ENCODE measurements at regions of chr1 and their contacts with region 1.

Region 1: DNA sequence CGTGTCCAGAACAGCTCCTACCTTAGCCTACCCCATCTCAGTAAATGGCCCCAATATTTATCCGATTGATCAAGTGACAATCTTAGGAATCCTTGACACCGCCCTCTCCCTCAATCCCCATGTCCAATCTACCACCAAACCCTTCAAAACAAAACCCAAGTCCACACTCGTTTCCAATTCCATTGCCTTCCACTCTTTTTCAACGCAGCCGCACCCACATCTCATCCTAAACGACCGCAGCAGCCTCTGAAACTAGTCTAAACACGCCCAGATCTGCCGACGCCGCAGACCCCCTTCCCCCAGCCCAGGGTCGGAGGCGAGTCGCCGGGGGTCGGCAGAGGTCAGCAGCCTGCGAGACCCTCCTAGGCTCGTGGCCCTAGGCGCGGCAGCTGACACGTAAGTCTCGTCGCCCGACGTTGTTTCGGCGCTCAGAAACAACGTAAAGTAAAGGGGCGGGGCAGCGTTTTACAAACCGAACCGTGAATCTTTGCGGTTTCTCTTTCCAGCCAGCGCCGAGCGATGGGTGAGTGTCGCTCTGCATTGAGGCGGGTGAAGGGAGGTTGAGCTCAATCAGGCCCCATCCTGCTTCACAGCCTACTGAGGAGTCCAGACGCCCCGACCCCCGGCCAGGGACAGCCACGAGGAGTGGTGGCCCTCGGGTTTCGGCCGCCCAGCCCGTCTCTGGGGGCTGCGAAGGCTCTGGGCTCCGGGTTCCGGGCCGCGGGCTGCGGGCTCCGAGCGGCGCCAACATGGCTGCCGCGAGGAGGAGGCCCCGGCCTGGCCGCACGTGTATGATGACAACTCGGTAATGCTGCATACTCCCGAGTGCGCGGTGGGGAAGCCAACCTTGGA is at the start of gene RPS8:
- DNase-seq: peak; percentile 84

Region 2: GRCh38 chr1:44401256-44402228 is 373.8 kb before region 1 on chr1:
- CTCF ChIA-PET with region 1: no interaction called
- POLR2A ChIA-PET with region 1: no interaction called
- DNase-seq: no peak

Region 3: DNA sequence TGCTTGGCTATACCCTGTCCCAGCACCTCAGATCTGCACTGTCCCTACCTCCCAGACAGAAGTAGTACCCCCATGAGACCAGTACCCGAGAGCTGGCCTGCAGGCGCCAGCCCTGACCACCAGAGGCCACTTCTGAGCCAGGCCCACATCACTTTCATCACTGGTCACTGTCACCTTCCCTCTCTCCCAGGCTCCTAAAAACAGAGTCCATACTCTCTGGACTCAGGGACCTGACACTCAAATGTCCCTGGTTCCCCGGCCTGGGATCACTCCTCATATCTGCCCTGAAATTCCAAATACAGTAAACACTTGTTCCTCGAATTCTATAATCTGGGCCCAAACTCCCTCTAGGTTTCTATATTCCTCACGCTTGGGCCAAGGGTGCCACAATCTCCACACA is 119.7 kb before region 1 on chr1:
- CTCF ChIA-PET with region 1: no interaction called
- POLR2A ChIA-PET with region 1: no interaction called
- DNase-seq: peak; percentile 62

Region 4: DNA sequence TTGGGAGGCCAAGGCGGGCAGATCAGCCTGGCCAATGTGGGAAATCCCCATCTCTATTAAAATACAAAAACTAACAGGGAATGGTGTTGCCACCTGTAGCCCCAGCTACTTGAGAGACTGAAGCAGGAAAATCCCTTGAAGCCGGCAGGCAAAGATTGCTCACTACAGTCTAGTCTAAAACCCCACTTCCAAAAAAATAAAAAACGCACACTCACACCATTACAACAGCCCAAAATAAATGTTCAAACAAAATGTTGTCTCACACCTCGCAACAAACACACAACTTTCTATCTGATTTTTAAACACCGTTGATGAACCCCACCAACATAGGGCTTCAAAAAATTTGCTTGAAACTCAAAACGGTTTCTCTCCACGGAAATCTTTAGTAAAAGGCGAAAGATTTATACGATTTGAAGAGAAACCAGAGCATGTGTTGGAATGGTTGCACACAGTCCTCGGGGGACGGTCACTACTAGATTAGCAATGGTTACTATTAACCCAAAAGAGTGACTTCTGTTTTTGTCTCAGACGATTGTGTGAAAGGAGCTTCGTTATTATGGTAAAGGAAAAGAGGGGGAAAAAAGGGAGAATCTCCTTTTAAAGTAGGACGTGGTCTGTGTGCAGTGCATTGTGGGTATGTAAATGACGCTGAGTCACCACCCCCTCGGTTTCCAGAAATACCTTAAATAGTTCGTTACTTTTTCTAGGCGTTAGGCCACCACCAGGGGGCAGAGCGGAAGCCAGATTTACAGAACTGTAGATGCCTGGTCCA is 44.4 kb before region 1 on chr1 and contains the start of gene RNU5D-1:
- CTCF ChIA-PET with region 1: interaction called, 3 read pairs
- POLR2A ChIA-PET with region 1: interaction called, 31 read pairs
- DNase-seq: peak; percentile 77

Region 5: DNA sequence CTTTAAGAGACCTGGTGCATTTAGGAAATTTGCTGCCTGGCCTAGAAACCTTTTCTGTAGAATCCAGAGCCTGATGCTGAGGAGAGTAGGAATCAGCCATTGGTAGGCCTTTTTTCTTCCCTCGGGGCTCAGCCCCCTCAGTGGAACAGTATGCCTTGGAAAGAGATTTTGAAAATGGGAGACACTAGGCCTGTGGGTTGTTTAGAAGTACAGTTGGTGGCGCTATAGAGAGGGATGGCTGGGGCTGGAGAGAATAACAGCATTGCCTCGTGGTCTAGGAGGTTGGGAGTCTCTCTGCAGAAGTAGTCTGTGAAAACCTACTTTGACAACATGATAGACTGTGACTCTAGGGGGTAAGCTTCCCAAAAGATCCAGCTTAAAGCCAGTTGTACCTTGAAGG is 27.4 kb before region 1 on chr1:
- CTCF ChIA-PET with region 1: no interaction called
- POLR2A ChIA-PET with region 1: interaction called, 17 read pairs
- DNase-seq: no peak

Region 6: DNA sequence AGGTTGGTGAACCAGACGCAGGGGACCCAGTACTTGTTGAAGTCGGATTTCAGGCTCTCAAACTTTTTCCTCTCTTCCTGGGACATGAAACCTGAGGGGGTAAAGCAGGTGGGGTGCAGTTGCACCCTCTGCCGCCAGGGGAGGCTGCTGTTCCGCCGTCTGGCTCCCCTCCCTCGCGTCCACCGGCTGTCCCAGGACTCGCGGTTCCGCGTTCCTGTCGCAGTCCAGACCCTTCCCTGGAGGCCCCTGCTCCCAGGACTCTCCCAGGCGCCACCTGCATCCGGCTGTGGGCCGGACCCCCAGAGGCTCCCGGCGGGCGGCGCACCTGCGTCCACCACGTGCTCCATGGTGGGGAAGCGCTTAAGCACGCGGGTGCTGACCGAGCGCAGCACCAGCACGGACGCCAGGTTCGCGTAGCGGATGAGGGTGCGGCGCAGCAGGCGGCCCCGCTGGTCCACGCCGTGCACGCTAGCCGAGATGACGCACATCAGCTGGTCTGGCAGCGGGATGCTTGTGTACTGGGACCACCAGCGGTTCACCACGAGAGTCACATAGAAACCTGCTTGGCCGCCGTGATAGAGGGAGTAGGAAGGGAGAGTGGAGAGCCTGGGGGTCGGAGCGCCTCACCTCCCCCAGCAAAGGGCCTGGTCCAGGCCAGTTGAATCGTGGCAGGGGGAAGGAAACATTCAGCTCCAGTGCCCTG is 11.0 kb after region 1 on chr1:
- CTCF ChIA-PET with region 1: interaction called, 3 read pairs
- POLR2A ChIA-PET with region 1: interaction called, 52 read pairs
- DNase-seq: peak; percentile 79

Region 7: DNA sequence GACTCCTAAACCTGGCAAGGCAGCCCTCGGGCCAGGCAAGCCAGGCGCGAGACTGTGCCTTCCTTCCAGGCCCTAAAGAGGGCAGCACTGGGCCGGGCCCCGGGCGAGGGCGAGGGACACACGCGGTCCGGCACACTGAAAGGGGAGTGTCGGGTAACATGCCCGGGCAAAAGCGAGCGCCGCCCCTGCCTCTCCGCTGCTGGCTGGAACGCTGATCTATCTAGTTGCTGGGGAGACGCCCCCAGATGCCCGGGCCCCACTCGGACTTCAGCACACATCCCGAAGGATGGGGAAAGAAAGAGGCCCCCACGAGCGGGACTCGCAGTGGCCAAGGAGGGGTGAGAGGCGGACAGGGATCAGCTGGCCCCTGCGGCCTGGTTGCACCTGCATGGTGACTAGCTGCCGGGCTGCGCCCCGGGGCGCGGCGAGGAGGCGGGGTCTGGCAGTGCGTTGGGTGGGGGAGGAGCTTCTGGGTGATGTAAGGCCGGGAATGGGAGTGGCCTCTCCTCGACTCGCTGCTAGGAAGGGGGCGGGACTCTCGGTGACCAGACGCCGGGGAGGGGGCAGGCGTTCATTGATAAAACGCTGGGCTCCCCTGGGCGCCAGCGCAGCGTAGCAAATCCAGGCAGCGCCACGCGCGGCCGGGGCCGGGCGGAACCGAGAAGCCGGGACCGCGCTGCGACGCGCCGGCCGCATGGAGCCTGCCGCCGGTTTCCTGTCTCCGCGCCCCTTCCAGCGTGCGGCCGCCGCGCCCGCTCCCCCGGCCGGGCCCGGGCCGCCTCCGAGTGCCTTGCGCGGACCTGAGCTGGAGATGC is 24.7 kb after region 1 on chr1 and contains the start of gene PLK3:
- CTCF ChIA-PET with region 1: no interaction called
- POLR2A ChIA-PET with region 1: interaction called, 10 read pairs
- DNase-seq: peak; percentile 91

Region 8: GRCh38 chr1:45065083-45065482 is 289.8 kb after region 1 on chr1:
- CTCF ChIA-PET with region 1: no interaction called
- POLR2A ChIA-PET with region 1: no interaction called
- DNase-seq: no peak